ENCODE measurements at regions of chr7 and their contacts with region 1.

Region 1: DNA sequence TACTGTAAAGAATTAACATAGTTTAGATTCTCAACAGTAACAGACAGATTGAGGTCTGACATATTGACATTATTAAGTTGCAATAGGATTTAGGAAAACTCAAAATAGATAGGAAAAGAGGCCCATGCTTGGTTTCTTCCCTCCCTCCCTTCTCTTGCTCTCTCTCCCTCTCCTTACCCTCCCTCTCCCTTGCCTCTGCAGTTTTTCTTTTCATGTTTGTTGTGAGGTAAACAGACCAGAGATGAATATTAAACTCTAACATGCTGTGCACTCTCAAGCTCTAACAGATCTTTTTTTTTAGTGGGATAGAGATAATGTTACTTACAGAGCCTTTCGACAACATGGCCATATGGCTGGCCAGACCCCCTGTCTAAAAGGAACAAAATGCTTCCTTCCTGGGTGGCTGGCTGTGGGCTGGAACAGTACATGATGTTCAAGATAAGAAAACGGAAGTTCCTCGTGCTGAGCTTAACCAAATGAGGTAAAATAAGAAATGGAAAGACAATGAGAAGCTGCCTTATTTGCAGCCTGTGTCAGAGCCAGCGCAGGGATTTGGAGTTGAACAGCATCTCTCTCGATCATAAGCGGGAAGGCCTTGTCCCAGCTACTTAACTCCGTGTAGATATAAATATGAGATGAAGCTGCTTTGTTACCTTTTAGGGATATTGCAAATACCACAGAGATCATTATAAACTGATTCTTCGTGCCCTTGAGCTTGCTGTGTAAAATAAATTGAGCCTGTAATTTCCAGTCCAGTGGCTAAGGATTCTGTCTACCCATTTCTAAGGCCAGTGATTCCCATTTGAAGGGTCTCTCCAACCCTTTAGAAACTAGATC is 391.9 kb upstream of the NPVF start:
- DNase-seq: peak in 7 of 9 donors; percentile 14 to 68 (median 47)
- ATAC-seq: peak; percentile 80
- H3K4me3 ChIP-seq: peak overlapping the region; percentile 19
- H3K4me3 Mint-ChIP-seq: peak overlapping the region; percentile 33 to 81 (median 76)
- H3K27ac ChIP-seq: peak overlapping the region; percentile 29
- H3K27ac Mint-ChIP-seq: peak overlapping the region in 8 of 9 donors; percentile 77 to 96 (median 88)
- H3K4me1 ChIP-seq: peaks cover 0 to 41% of the 10 kb centered on the region in 2 donors
- H3K4me1 Mint-ChIP-seq: peaks cover 13 to 73% (median 64%) of the 10 kb centered on the region in 7 donors
- H3K27me3 ChIP-seq: no peaks in the 10 kb centered on the region
- H3K27me3 Mint-ChIP-seq: no peaks in the 10 kb centered on the region

Region 2: GRCh38 chr7:25642849-25643248 is 22.7 kb after region 1 on chr7:
- CTCF ChIA-PET with region 1: no interaction called
- POLR2A ChIA-PET with region 1: no interaction called
- intact Hi-C with region 1: no loop called
- DNase-seq: no peak
- ATAC-seq: no peak
- H3K4me3 ChIP-seq: no peak overlapping the region
- H3K4me3 Mint-ChIP-seq: no peak overlapping the region
- H3K27ac ChIP-seq: no peak overlapping the region
- H3K27ac Mint-ChIP-seq: no peak overlapping the region
- H3K4me1 ChIP-seq: no peaks in the 10 kb centered on the region
- H3K4me1 Mint-ChIP-seq: peaks cover 0 to 12% (median 5%) of the 10 kb centered on the region in 7 donors
- H3K27me3 ChIP-seq: no peaks in the 10 kb centered on the region
- H3K27me3 Mint-ChIP-seq: peaks cover 0 to 2% (median 0%) of the 10 kb centered on the region in 5 donors

Region 3: GRCh38 chr7:25656581-25657026 is 36.4 kb after region 1 on chr7:
- CTCF ChIA-PET with region 1: no interaction called
- POLR2A ChIA-PET with region 1: no interaction called
- intact Hi-C with region 1: loop called in 1 of 2 experiments (anchors 2 kb)
- DNase-seq: no peak
- ATAC-seq: no peak
- H3K4me3 ChIP-seq: no peak overlapping the region
- H3K4me3 Mint-ChIP-seq: peak overlapping the region in 3 of 10 donors; percentile 14 to 36 (median 29)
- H3K27ac ChIP-seq: no peak overlapping the region
- H3K27ac Mint-ChIP-seq: peak overlapping the region in 2 of 9 donors; percentile 9 to 19
- H3K4me1 ChIP-seq: peaks cover 0 to 8% of the 10 kb centered on the region in 2 donors
- H3K4me1 Mint-ChIP-seq: peaks cover 0 to 43% (median 34%) of the 10 kb centered on the region in 7 donors
- H3K27me3 ChIP-seq: no peaks in the 10 kb centered on the region
- H3K27me3 Mint-ChIP-seq: peaks cover 0 to 10% (median 0%) of the 10 kb centered on the region in 5 donors

Region 4: GRCh38 chr7:25851332-25852210 is 231.4 kb after region 1 on chr7:
- CTCF ChIA-PET with region 1: no interaction called
- POLR2A ChIA-PET with region 1: no interaction called
- intact Hi-C with region 1: loop called (anchors 1 to 5 kb)
- DNase-seq: peak in 8 of 9 donors; percentile 43 to 69 (median 62)
- ATAC-seq: peak; percentile 84
- H3K4me3 ChIP-seq: no peak overlapping the region
- H3K4me3 Mint-ChIP-seq: peak overlapping the region; percentile 16 to 85 (median 76)
- H3K27ac ChIP-seq: no peak overlapping the region
- H3K27ac Mint-ChIP-seq: peak overlapping the region in 7 of 9 donors; percentile 5 to 79 (median 74)
- H3K4me1 ChIP-seq: peaks cover 3 to 9% of the 10 kb centered on the region in 2 donors
- H3K4me1 Mint-ChIP-seq: peaks cover 4 to 27% (median 19%) of the 10 kb centered on the region in 7 donors
- H3K27me3 ChIP-seq: peaks cover 29 to 50% of the 10 kb centered on the region in 2 donors
- H3K27me3 Mint-ChIP-seq: peaks cover 43 to 63% (median 59%) of the 10 kb centered on the region in 5 donors

Region 5: DNA sequence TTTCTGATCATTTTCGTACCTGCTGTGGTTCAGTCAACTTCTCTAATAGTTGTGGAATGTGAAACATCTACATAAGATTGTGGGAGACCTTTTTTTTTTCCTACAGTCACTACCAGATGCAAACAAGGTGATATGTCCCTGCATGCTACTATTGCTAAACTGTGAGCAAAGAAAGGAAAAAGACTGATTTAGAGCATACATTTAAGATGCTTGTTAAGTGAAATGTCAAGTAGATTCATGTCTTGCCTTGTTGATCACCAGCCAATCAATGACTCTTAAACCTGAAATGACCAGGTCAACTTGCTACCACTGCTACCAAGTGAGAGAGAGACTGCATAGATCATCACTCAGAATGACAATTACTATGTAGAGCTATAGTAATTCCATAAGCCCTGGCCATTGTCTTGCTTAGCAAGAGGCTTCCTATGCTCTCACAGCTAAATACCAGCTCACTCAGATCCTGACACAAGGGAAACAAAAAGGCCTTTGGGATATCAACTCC is 1328.5 kb after region 1 on chr7:
- CTCF ChIA-PET with region 1: no interaction called
- POLR2A ChIA-PET with region 1: no interaction called
- intact Hi-C with region 1: no loop called
- DNase-seq: no peak
- ATAC-seq: no peak
- H3K4me3 ChIP-seq: no peak overlapping the region
- H3K4me3 Mint-ChIP-seq: no peak overlapping the region
- H3K27ac ChIP-seq: no peak overlapping the region
- H3K27ac Mint-ChIP-seq: no peak overlapping the region
- H3K4me1 ChIP-seq: no peaks in the 10 kb centered on the region
- H3K4me1 Mint-ChIP-seq: no peaks in the 10 kb centered on the region
- H3K27me3 ChIP-seq: no peaks in the 10 kb centered on the region
- H3K27me3 Mint-ChIP-seq: peaks cover 8 to 39% (median 27%) of the 10 kb centered on the region in 5 donors